ENCODE measurements at regions of chr6 and their contacts with region 1.

Region 1: GRCh38 chr6:29926413-29927274 is 15.7 kb upstream of the HLA-A start:
- DNase-seq: peak; percentile 73
- ATAC-seq: peak; percentile 93
- H3K4me3 ChIP-seq: peak overlapping the region; percentile 89
- H3K27ac ChIP-seq: peak overlapping the region; percentile 90
- H3K4me1 ChIP-seq: no peaks in the 10 kb centered on the region
- H3K27me3 ChIP-seq: no peaks in the 10 kb centered on the region
- CTCF ChIP-seq: no peak
- POLR2A ChIP-seq: no peak; the same call in 1 of the 2 replicates
- RAD21 ChIP-seq: no peak

Region 2: DNA sequence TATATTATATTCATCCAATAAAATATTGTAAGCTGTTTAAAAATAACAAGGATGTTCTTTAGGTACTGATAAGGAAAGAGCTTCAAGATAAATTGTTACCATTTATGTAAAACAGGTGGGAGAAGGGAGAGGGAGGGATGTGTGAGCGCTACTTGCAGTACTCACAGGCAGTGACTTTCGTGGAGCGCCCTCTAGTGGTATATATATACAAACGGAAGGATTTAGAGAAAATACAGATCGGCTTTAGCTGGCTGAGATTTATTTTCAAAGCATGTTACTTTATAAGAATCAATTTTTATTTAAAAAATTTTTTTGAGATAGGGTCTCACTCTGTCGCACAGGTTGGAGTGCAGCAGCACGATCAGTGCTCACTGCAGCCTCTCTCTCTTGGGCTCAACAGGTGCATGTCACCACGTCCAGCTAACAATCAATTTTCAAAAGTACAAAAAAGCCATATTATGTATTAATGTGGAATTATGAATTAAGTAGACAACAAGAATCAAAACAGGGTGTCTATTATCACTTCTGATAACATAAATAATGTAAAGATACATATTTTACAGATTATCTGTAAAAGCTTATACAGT is 273.1 kb before region 1 on chr6:
- CTCF ChIA-PET with region 1: no interaction called
- POLR2A ChIA-PET with region 1: no interaction called
- dilution Hi-C with region 1: no loop called
- in situ Hi-C with region 1: no loop called
- intact Hi-C with region 1: no loop called
- DNase-seq: peak; percentile 80
- ATAC-seq: no peak
- H3K4me3 ChIP-seq: no peak overlapping the region
- H3K27ac ChIP-seq: no peak overlapping the region
- H3K4me1 ChIP-seq: no peaks in the 10 kb centered on the region
- H3K27me3 ChIP-seq: peaks cover 16% of the 10 kb centered on the region
- CTCF ChIP-seq: peak; percentile 58
- POLR2A ChIP-seq: no peak
- RAD21 ChIP-seq: no peak

Region 3: GRCh38 chr6:29976588-29977424 is 50.2 kb after region 1 on chr6:
- CTCF ChIA-PET with region 1: no interaction called
- POLR2A ChIA-PET with region 1: no interaction called
- dilution Hi-C with region 1: no loop called
- in situ Hi-C with region 1: no loop called
- intact Hi-C with region 1: loop called (anchors 1 kb)
- DNase-seq: peak; percentile 72
- ATAC-seq: peak; percentile 96
- H3K4me3 ChIP-seq: peak overlapping the region; percentile 60
- H3K27ac ChIP-seq: peak overlapping the region; percentile 58
- H3K4me1 ChIP-seq: no peaks in the 10 kb centered on the region; the same call in 1 of the 2 replicates
- H3K27me3 ChIP-seq: peaks cover 17% of the 10 kb centered on the region
- CTCF ChIP-seq: peak; percentile 43
- POLR2A ChIP-seq: peak; percentile 67; the same call in 1 of the 2 replicates
- RAD21 ChIP-seq: peak; percentile 36; the same call in 1 of the 2 replicates

Region 4: DNA sequence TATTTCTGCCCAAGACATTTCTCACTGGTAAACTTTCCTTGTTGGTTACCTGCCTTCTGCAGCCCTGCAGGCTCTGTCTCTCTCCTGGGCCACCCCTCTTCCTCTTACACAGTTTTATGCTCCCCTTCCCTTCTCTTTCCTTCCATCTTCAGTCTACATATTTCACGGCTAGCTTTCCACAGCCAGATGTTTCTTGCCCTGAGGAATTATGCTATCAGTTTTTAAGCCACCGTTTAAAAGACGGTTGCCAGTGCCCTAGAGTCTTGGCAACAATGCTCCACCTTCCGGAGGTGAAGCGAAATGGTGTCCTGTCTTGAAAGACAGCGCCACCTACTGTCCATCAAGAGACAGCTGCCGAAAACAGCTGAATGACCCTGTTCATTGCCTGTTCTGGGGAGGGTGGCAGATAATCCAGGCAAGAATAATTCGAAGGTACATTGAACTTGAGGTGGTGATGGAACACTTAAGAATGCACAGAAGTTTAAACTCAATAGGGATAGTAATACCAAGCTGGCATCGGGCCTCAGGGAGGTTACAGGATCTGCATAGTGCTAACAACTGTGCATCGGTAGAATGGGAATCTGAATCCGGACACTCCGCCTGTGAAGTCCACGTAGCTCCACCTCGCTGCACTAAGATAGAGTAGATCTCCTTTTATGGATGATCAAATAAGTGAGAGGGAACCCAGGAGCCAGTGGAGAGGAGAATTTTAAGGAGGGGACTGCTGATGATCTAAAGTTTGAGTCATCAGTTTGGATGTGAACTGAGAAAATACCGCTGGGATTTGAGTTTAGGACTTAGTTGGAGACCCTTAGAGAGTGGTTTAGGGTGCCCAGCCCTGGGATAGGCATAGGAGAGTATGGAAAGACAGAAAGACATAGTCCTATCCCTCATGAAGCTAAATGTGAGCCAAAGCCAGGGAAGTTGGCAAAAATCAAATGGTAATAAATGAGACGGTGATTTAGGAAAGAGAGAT is 204.5 kb after region 1 on chr6:
- CTCF ChIA-PET with region 1: no interaction called
- POLR2A ChIA-PET with region 1: no interaction called
- dilution Hi-C with region 1: no loop called
- in situ Hi-C with region 1: no loop called
- intact Hi-C with region 1: no loop called
- DNase-seq: peak; percentile 85
- ATAC-seq: peak; percentile 96
- H3K4me3 ChIP-seq: no peak overlapping the region
- H3K27ac ChIP-seq: no peak overlapping the region
- H3K4me1 ChIP-seq: no peaks in the 10 kb centered on the region
- H3K27me3 ChIP-seq: peaks cover 48% of the 10 kb centered on the region
- CTCF ChIP-seq: peak; percentile 99
- POLR2A ChIP-seq: no peak
- RAD21 ChIP-seq: peak; percentile 81

Measured in IMR-90 (cell line).